ENCODE measurements at regions of chr5 and their contacts with region 1.

Region 1: GRCh38 chr5:89988998-89989655 is 420.4 kb downstream of the CETN3 start:
- DNase-seq: peak; percentile 30
- ATAC-seq: peak; percentile 73 to 87

Region 2: GRCh38 chr5:89930591-89931392 is 58.3 kb before region 1 on chr5:
- intact Hi-C with region 1: loop called in 1 of 2 experiments (anchors 2 kb)
- DNase-seq: no peak
- ATAC-seq: peak in 1 of 2 donors; percentile 49

Region 3: GRCh38 chr5:90014420-90014819 is 25.3 kb after region 1 on chr5:
- intact Hi-C with region 1: no loop called
- DNase-seq: no peak
- ATAC-seq: no peak

Region 4: DNA sequence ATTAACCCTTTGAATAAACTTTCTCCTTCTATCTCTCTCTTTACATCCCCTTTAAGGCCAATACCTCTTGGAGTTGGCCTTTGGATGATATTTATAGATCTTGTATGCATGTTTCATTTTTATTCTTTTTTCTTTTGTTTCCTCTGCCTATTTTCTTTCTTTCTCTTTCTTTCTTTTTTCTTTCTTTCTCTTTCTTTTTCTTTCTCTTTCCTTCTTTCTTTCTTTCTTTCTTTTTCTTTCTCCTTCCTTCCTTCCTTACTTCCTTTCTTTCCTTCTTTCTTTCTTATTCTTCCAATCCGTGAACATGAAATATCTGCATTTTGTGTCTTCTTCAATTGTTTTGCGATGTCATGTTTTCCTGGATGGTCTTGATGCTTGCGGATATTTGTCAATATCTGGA is 845.6 kb after region 1 on chr5:
- intact Hi-C with region 1: no loop called
- DNase-seq: no peak
- ATAC-seq: no peak

Measured in left cardiac atrium (tissue), 4 donors.